Mammary epithelial cell (primary cell): ENCODE measurements at regions of chr7 and their contacts with region 1.

Region 1: DNA sequence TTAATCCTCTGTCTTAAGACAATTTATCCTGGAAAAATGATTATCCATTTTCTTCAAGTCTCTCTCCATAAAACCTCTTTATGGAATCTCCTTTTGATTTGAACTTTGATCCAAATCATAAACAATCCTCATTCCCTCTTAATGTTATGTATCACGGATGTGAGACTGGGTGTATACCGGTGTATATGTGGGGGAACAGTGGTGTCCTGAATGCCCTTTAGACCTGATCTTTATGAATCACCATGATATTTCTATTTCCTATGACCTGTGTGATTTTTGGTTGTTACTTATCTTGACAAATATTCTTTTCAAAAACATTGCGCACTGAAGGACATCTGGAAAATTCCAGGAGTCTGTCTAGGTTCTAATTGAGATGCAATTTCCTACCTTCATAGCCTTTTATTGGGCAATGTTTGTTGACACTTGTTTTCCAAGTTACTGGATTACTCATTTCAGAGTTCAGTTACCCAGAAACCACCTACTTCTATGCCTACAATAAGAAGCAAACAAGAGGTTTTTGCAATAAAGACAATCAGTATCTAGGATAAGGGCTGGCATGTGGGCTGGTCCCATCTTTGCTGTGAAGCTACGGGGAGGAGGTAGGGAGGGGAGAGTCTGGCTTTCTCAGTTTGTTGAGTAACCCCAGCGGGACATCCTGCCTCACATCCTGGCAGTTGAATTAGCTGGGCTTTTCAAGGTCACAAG is 190.4 kb downstream of the CTTNBP2 start:
- DNase-seq: peak; percentile 48
- H3K4me3 ChIP-seq: no peak overlapping the region
- H3K27ac ChIP-seq: no peak overlapping the region
- H3K4me1 ChIP-seq: no peaks in the 10 kb centered on the region
- H3K27me3 ChIP-seq: peaks cover 3% of the 10 kb centered on the region
- CTCF ChIP-seq: no peak

Region 2: DNA sequence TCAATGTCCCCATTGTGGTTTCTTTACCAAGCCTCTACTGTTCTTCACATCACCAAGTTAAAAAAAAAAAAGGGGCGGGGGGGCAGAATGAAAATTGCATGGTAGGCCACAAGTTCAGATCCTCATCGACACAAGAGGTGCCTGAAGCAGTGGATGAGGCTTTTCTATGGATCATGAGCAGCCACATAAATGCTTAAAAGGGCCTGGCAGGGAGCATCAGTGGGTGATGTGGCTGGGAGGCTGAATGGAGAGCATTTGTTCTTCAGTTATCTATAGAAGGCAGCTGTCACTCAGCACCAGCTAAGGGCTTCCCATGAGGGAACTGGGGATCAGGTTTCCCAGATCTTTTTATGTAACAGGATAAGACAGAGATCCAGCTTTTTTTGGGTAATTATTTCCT is 85.1 kb before region 1 on chr7:
- CTCF ChIA-PET with region 1: no interaction called
- dilution Hi-C with region 1: no loop called
- in situ Hi-C with region 1: no loop called
- intact Hi-C with region 1: no loop called
- DNase-seq: no peak
- H3K4me3 ChIP-seq: no peak overlapping the region
- H3K27ac ChIP-seq: no peak overlapping the region
- H3K4me1 ChIP-seq: no peaks in the 10 kb centered on the region
- H3K27me3 ChIP-seq: no peaks in the 10 kb centered on the region
- CTCF ChIP-seq: no peak

Region 3: GRCh38 chr7:117645456-117646181 is 37.2 kb before region 1 on chr7:
- CTCF ChIA-PET with region 1: interaction called, 14 read pairs
- dilution Hi-C with region 1: no loop called
- in situ Hi-C with region 1: no loop called
- intact Hi-C with region 1: no loop called
- DNase-seq: peak; percentile 25
- H3K4me3 ChIP-seq: no peak overlapping the region
- H3K27ac ChIP-seq: no peak overlapping the region
- H3K4me1 ChIP-seq: peaks cover 6% of the 10 kb centered on the region
- H3K27me3 ChIP-seq: no peaks in the 10 kb centered on the region
- CTCF ChIP-seq: no peak

Region 4: DNA sequence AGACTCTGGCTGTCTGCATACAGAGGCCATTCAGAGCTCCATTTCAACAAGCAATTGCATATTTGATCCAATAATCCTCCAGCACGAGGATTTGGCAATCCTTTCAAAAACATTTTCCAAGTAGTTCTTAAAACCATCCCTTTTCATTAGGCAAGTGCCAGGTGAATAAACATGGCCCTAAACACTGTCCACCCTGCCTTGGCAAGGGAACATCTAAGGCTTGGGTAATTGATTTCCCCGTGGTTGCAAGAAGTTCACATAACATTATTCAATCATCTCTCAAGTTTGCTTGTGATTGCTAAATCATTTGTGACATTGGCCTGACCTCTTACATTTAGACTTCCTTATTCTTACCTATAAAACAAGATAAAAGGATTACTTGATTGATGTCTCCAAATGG is 15.2 kb after region 1 on chr7:
- CTCF ChIA-PET with region 1: no interaction called
- dilution Hi-C with region 1: no loop called
- in situ Hi-C with region 1: no loop called
- intact Hi-C with region 1: no loop called
- DNase-seq: no peak
- H3K4me3 ChIP-seq: no peak overlapping the region
- H3K27ac ChIP-seq: no peak overlapping the region
- H3K4me1 ChIP-seq: no peaks in the 10 kb centered on the region
- H3K27me3 ChIP-seq: no peaks in the 10 kb centered on the region
- CTCF ChIP-seq: no peak